ENCODE measurements at regions of chr3 and their contacts with region 1.

Region 1: GRCh38 chr3:138923531-138923994 is 23.4 kb downstream of the FOXL2 start:
- DNase-seq: peak; percentile 79 to 83 (median 83)
- H3K4me3 ChIP-seq: no peak overlapping the region
- H3K4me3 Mint-ChIP-seq: no peak overlapping the region
- H3K27ac ChIP-seq: no peak overlapping the region
- H3K27ac Mint-ChIP-seq: peak overlapping the region in 1 of 7 donors; percentile 18
- H3K4me1 ChIP-seq: no peaks in the 10 kb centered on the region
- H3K4me1 Mint-ChIP-seq: peaks cover 6% of the 10 kb centered on the region
- H3K27me3 ChIP-seq: peaks cover 0 to 10% of the 10 kb centered on the region in 2 donors
- H3K27me3 Mint-ChIP-seq: peaks cover 5 to 7% (median 6%) of the 10 kb centered on the region in 3 donors
- CTCF ChIP-seq: peak; percentile 87

Region 2: GRCh38 chr3:138068579-138069174 is 854.9 kb before region 1 on chr3:
- intact Hi-C with region 1: loop called (anchors 10 kb)
- DNase-seq: peak; percentile 56 to 76 (median 67)
- H3K4me3 ChIP-seq: no peak overlapping the region
- H3K4me3 Mint-ChIP-seq: no peak overlapping the region
- H3K27ac ChIP-seq: no peak overlapping the region
- H3K27ac Mint-ChIP-seq: no peak overlapping the region
- H3K4me1 ChIP-seq: no peaks in the 10 kb centered on the region
- H3K4me1 Mint-ChIP-seq: peaks cover 1% of the 10 kb centered on the region
- H3K27me3 ChIP-seq: no peaks in the 10 kb centered on the region
- H3K27me3 Mint-ChIP-seq: peaks cover 0 to 3% (median 0%) of the 10 kb centered on the region in 3 donors
- CTCF ChIP-seq: peak; percentile 96

Region 3: DNA sequence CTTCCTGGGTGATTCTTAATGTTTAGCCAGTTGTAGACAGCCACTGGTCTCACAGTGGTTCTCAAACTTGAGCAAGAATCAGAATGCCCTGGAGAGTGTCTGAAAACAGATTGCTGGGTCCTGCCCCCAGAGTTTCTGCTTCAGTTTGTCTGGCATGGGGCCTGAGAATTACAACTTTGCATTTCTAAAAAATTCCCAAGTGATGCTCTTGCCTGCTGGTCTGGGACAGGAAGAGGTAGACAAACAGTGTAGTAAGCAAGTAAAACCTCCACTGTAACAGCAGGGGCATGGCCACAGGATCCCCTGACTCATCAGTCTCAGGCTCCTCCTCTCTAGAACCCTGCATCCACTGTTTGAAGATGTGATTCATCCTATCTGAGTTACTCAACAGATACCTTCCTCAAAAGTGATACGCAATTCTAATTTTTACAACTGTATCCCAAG is 844.6 kb before region 1 on chr3:
- intact Hi-C with region 1: loop called in 1 of 2 experiments (anchors 10 kb)
- DNase-seq: peak; percentile 53 to 91 (median 72)
- H3K4me3 ChIP-seq: no peak overlapping the region
- H3K4me3 Mint-ChIP-seq: peak overlapping the region in 1 of 2 donors; percentile 29
- H3K27ac ChIP-seq: peak overlapping the region in 1 of 2 donors; percentile 24
- H3K27ac Mint-ChIP-seq: peak overlapping the region; percentile 3 to 83 (median 75)
- H3K4me1 ChIP-seq: peaks cover 23 to 39% of the 10 kb centered on the region in 2 donors
- H3K4me1 Mint-ChIP-seq: peaks cover 28% of the 10 kb centered on the region
- H3K27me3 ChIP-seq: no peaks in the 10 kb centered on the region
- H3K27me3 Mint-ChIP-seq: peaks cover 0 to 3% (median 0%) of the 10 kb centered on the region in 3 donors
- CTCF ChIP-seq: no peak

Region 4: DNA sequence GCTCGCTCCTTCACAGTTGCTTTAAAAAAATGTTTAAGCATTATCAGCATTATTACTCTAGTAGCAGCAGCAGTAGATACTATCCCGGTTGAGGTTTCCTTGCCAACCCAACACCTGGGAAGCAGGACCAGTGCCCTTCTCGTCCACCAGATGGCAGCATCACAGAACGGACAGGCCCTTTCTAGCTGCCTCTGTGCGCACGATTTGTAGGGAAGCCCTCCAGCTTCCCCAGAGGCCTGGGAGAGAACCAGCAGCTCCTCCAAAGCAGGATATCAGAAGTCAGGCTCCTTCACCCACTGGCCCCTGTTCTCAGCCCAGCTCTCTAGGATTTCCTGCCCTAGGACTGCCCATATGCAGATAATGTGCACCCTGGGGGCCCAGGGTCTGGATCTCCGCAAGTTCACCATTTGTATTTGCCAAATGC is 506.0 kb before region 1 on chr3:
- intact Hi-C with region 1: loop called (anchors 5 to 10 kb)
- DNase-seq: peak; percentile 57 to 66 (median 61)
- H3K4me3 ChIP-seq: no peak overlapping the region
- H3K4me3 Mint-ChIP-seq: no peak overlapping the region
- H3K27ac ChIP-seq: no peak overlapping the region
- H3K27ac Mint-ChIP-seq: peak overlapping the region in 1 of 7 donors; percentile 26
- H3K4me1 ChIP-seq: peaks cover 11 to 12% of the 10 kb centered on the region in 2 donors
- H3K4me1 Mint-ChIP-seq: peaks cover 11% of the 10 kb centered on the region
- H3K27me3 ChIP-seq: no peaks in the 10 kb centered on the region
- H3K27me3 Mint-ChIP-seq: peaks cover 3 to 9% (median 5%) of the 10 kb centered on the region in 3 donors
- CTCF ChIP-seq: peak; percentile 85

Region 5: DNA sequence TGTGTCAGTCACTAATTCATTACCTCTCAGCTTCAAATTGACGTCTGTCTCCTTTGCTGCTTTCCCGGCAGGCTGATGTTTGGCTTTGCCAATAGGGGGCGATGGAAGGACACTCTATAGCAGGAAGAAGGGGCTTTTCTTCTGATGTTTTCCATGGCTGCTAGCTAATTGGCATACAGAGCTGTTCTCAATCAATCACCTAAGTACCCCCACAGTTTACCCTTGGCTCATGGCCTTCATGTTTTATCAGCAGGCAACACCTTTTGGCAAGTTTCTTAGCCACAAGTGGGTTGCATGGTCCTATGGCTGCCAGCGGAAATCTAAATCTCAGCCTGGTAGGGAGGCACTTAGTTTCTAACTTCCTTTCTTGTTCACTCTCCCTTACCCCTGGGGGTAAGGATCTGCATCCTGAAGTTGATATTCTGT is 444.1 kb before region 1 on chr3:
- intact Hi-C with region 1: loop called in 1 of 2 experiments (anchors 10 kb)
- DNase-seq: peak; percentile 9 to 34 (median 23)
- H3K4me3 ChIP-seq: no peak overlapping the region
- H3K4me3 Mint-ChIP-seq: no peak overlapping the region
- H3K27ac ChIP-seq: no peak overlapping the region
- H3K27ac Mint-ChIP-seq: no peak overlapping the region
- H3K4me1 ChIP-seq: no peaks in the 10 kb centered on the region
- H3K4me1 Mint-ChIP-seq: peaks cover 8% of the 10 kb centered on the region
- H3K27me3 ChIP-seq: no peaks in the 10 kb centered on the region
- H3K27me3 Mint-ChIP-seq: peaks cover 1 to 2% (median 2%) of the 10 kb centered on the region in 3 donors
- CTCF ChIP-seq: peak; percentile 87

Region 6: DNA sequence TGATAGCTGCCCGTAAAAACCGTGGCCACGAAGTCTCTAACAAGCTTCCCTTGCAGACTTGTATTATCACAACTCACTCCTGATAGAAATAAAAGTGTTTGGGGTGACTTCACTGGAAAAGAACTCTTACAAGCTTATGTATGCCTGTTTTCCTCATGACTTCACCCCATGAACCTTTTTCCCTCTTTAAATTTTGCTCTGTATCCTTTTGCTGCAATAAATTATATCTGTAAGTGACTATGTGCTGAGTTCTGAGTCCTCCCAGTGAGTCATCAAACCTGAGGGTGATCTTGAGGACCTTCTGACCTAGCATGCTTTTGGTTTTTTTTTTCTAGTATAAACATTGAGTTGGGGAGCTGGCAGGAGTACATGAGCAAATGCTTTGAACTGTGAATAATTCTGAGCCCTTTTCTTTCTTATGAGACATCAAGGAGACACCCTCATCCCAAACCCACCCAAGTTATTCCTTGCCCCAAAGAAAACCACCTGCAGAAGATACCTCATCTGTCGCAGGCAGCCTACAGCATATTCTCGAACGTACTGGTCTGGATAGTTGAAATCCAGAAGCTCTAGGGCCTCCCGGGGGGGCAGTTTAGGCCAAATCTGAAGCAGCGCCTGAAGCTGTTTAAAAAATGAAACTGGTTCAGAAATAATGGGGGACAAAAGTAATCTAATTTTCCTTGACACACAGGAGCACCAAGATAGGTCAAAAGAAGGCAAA is 229.1 kb before region 1 on chr3:
- intact Hi-C with region 1: loop called in 1 of 2 experiments (anchors 5 kb)
- DNase-seq: no peak
- H3K4me3 ChIP-seq: no peak overlapping the region
- H3K4me3 Mint-ChIP-seq: no peak overlapping the region
- H3K27ac ChIP-seq: no peak overlapping the region
- H3K27ac Mint-ChIP-seq: peak overlapping the region in 2 of 7 donors; percentile 61 to 70
- H3K4me1 ChIP-seq: no peaks in the 10 kb centered on the region
- H3K4me1 Mint-ChIP-seq: no peaks in the 10 kb centered on the region
- H3K27me3 ChIP-seq: no peaks in the 10 kb centered on the region
- H3K27me3 Mint-ChIP-seq: no peaks in the 10 kb centered on the region
- CTCF ChIP-seq: no peak

Region 7: DNA sequence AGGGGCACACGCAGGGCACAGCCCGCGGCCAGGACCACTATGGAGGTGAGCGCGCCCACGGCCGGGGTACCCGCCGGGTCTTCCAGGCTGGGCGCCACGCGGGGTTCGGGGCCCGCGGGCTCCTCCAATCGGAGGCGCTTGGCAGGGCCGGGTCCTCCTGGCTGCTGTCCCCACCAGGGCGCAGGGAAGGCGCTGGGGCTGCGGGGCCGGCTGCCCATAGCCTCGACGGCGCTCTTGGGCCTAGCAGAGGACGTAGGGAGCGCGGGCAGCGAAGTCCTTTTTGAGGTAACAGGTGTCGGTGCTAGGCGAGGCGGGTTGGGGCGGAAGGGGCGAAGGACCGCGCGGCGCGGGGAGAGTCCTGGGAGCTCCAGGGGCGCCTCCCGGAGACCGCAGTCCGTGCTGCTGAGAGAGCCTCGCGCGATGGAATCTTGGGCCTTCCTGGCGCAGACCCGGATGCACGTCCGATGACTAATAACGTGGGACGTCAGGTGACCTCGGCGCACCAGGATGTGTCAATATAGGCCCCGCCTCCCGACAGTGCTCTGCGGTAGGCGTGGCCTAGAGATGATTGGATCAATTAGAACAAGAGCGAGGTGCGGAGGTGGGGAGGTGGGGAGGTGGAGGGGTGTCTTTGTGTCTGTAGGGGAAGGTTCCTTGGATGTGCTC is 82.6 kb after region 1 on chr3 and contains the start of gene PRR23A:
- intact Hi-C with region 1: no loop called
- DNase-seq: no peak
- H3K4me3 ChIP-seq: no peak within 1 kb of the TSS
- H3K4me3 Mint-ChIP-seq: no peak within 1 kb of the TSS
- H3K27ac ChIP-seq: no peak within 1 kb of the TSS
- H3K27ac Mint-ChIP-seq: no peak within 1 kb of the TSS
- H3K4me1 ChIP-seq: no peaks in the 10 kb centered on the region
- H3K4me1 Mint-ChIP-seq: no peaks in the 10 kb centered on the region
- H3K27me3 ChIP-seq: no peaks in the 10 kb centered on the region
- H3K27me3 Mint-ChIP-seq: peaks cover 3 to 8% (median 6%) of the 10 kb centered on the region in 3 donors
- CTCF ChIP-seq: no peak
- polyA plus RNA-seq, gene PRR23A: not detected

Measured in CD14-positive monocyte (primary cell).